ENCODE measurements at regions of chr18 and their contacts with region 1.

Region 1: GRCh38 chr18:70195852-70196434 is 9.5 kb downstream of the RTTN start:
- DNase-seq: peak; percentile 35
- ATAC-seq: no peak
- H3K4me3 Mint-ChIP-seq: no peak overlapping the region
- H3K27ac Mint-ChIP-seq: no peak overlapping the region
- H3K4me1 Mint-ChIP-seq: peaks cover 37% of the 10 kb centered on the region
- H3K27me3 Mint-ChIP-seq: no peaks in the 10 kb centered on the region

Region 2: DNA sequence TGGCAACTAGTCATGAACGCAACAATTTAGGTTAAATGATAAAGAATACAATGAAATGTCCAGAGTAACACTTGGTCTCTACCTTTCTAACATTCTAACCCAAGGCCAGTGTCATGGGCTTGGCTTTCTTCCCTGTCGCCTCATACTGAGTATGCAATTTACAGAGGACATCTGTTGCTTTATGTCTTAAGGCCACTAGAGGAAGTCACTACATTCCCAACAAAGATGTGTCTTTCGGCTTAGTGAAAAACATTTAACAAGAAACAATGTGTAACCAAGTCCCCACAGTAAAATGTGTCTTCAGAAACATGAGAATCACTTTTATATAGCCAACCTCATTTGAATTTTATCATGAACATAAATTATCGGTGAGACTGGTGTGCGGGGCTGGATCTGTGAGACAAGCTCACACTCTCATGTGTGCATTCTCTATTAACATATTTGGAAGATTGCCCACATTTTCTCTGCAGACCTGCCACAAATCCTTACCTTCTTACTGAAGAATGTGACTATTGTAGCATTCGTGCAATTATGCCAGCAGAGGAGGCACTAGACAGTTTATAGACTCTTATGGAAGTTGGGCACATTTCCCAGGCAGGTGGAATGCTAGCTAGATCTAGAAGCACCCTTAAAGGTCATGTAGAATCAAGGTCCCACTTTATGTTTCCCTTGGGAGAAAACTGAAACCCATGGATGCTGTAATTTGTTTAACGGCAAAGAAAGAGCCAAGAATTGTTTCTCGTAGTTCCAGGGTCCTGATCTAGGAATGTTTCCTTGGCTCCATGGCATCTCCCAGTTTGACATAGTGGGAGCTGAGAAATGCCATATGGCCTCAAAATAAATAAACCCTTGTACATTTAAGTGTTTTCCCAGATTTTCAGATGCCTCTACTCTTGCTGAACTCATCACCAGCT is 350.1 kb before region 1 on chr18:
- CTCF ChIA-PET with region 1: no interaction called
- POLR2A ChIA-PET with region 1: no interaction called
- intact Hi-C with region 1: no loop called
- DNase-seq: no peak
- ATAC-seq: no peak
- H3K4me3 Mint-ChIP-seq: no peak overlapping the region
- H3K27ac Mint-ChIP-seq: no peak overlapping the region
- H3K4me1 Mint-ChIP-seq: no peaks in the 10 kb centered on the region
- H3K27me3 Mint-ChIP-seq: no peaks in the 10 kb centered on the region

Region 3: DNA sequence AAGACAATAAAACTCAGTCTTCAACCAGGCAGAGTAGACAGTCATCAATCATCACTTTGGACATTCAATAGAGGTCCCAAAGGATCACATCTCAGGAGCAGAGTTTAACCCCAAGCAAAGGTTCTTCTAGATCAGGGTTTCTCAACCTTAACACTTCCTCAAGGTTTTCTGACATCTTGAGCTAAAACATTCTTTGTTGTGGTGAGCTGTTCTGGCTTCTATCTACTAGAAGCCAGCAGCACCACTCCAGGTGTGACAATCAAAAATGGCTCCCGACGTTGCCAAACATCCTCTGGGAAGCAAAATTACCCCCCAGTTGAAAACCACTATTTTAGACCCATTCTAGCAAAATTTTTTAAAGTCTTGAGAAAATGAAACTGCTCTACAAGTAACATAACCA is 12.5 kb before region 1 on chr18:
- CTCF ChIA-PET with region 1: interaction called, 11 read pairs
- POLR2A ChIA-PET with region 1: no interaction called
- intact Hi-C with region 1: no loop called
- DNase-seq: no peak
- ATAC-seq: no peak
- H3K4me3 Mint-ChIP-seq: no peak overlapping the region
- H3K27ac Mint-ChIP-seq: no peak overlapping the region
- H3K4me1 Mint-ChIP-seq: peaks cover 12% of the 10 kb centered on the region
- H3K27me3 Mint-ChIP-seq: no peaks in the 10 kb centered on the region

Region 4: DNA sequence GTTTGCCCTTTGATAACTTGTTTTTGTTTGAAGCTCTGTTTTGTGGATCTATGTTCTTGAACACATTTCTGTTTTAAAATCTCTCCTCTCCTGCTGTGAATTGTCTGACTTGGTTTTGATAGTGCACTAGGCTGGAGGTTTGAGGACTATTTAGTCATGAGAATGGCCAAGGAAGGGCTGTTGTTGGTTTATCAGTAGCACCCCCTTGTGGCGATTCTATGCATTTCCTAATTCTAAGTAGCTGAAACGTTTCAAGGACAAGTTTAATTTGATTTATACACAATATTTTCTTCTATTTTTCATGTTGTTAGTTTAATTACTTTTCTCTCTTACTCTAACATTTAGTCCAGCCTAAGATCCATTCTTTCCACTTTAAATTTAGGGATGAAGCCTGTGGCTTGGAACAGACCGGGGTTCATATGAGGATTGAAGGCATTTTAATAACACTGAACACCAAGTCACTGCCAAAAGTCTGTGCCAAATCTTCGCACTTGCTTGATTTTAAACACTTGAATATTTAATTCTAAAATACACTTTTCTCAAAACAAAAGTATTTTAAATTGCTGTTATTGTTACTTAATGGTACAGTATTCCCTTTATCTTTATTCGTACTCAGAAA is 258.9 kb after region 1 on chr18:
- CTCF ChIA-PET with region 1: interaction called, 17 read pairs
- POLR2A ChIA-PET with region 1: no interaction called
- intact Hi-C with region 1: loop called (anchors 1 to 5 kb)
- DNase-seq: peak; percentile 52
- ATAC-seq: peak; percentile 76
- H3K4me3 Mint-ChIP-seq: no peak overlapping the region
- H3K27ac Mint-ChIP-seq: no peak overlapping the region
- H3K4me1 Mint-ChIP-seq: no peaks in the 10 kb centered on the region
- H3K27me3 Mint-ChIP-seq: peaks cover 2% of the 10 kb centered on the region